ENCODE measurements at regions of chr14 and their contacts with region 1.

Region 1: GRCh38 chr14:58244556-58245387 is at the start of gene PSMA3:
- DNase-seq: peak; percentile 94 to 98 (median 98)
- ATAC-seq: peak; percentile 83
- H3K4me3 ChIP-seq: peak within 1 kb of the TSS; percentile 92 to 93
- H3K4me3 Mint-ChIP-seq: peak within 1 kb of the TSS; percentile 99
- H3K27ac ChIP-seq: peak within 1 kb of the TSS; percentile 91 to 96
- H3K27ac Mint-ChIP-seq: peak within 1 kb of the TSS; percentile 98
- H3K4me1 ChIP-seq: peaks cover 30% of the 10 kb centered on the region
- H3K4me1 Mint-ChIP-seq: peaks cover 49% of the 10 kb centered on the region
- H3K27me3 ChIP-seq: no peaks in the 10 kb centered on the region
- H3K27me3 Mint-ChIP-seq: no peaks in the 10 kb centered on the region
- CTCF ChIP-seq: no peak
- total RNA-seq, gene PSMA3: 105 to 106 TPM

Region 2: DNA sequence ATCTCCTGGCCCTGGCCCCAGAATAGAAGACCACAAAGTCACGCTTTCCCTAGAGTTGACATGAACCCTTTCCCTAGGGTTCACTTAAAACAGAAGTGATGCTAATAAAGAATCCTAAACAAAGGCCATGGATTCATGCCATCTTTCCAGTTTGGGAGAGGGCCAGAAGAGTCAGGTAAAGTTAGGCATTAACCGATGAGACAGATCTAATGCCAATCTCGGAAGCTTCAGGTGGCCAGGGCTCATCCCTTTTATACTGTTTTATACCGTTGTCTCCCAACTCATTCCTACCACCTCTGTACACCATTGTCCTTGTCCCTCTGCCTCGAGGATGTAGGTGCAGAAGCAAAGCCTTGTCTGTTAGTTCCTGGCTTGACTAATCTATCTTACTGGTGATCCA is 67.6 kb before region 1 on chr14:
- CTCF ChIA-PET with region 1: no interaction called
- POLR2A ChIA-PET with region 1: no interaction called
- intact Hi-C with region 1: no loop called
- DNase-seq: no peak
- ATAC-seq: no peak
- H3K4me3 ChIP-seq: no peak overlapping the region
- H3K4me3 Mint-ChIP-seq: no peak overlapping the region
- H3K27ac ChIP-seq: no peak overlapping the region
- H3K27ac Mint-ChIP-seq: no peak overlapping the region
- H3K4me1 ChIP-seq: no peaks in the 10 kb centered on the region
- H3K4me1 Mint-ChIP-seq: no peaks in the 10 kb centered on the region
- H3K27me3 ChIP-seq: no peaks in the 10 kb centered on the region
- H3K27me3 Mint-ChIP-seq: peaks cover 12% of the 10 kb centered on the region
- CTCF ChIP-seq: no peak

Region 3: GRCh38 chr14:58199726-58200479 is 44.9 kb before region 1 on chr14 and contains the start of gene ACTR10:
- CTCF ChIA-PET with region 1: interaction called, 4 read pairs
- POLR2A ChIA-PET with region 1: interaction called, 10 read pairs
- intact Hi-C with region 1: loop called (anchors 1 kb)
- DNase-seq: peak; percentile 76 to 95 (median 85)
- ATAC-seq: peak; percentile 87
- H3K4me3 ChIP-seq: peak within 1 kb of the TSS; percentile 75 to 92
- H3K4me3 Mint-ChIP-seq: peak within 1 kb of the TSS; percentile 94
- H3K27ac ChIP-seq: peak within 1 kb of the TSS; percentile 86 to 87
- H3K27ac Mint-ChIP-seq: peak within 1 kb of the TSS; percentile 98
- H3K4me1 ChIP-seq: peaks cover 25% of the 10 kb centered on the region
- H3K4me1 Mint-ChIP-seq: peaks cover 46% of the 10 kb centered on the region
- H3K27me3 ChIP-seq: no peaks in the 10 kb centered on the region
- H3K27me3 Mint-ChIP-seq: no peaks in the 10 kb centered on the region
- CTCF ChIP-seq: no peak
- total RNA-seq, gene ACTR10: 47.5 to 47.7 TPM

Region 4: GRCh38 chr14:58258156-58258555 is 13.4 kb after region 1 on chr14:
- CTCF ChIA-PET with region 1: interaction called, 3 read pairs
- POLR2A ChIA-PET with region 1: interaction called, 13 read pairs
- intact Hi-C with region 1: no loop called
- DNase-seq: no peak
- ATAC-seq: no peak
- H3K4me3 ChIP-seq: no peak overlapping the region
- H3K4me3 Mint-ChIP-seq: no peak overlapping the region
- H3K27ac ChIP-seq: no peak overlapping the region
- H3K27ac Mint-ChIP-seq: peak overlapping the region; percentile 60
- H3K4me1 ChIP-seq: no peaks in the 10 kb centered on the region
- H3K4me1 Mint-ChIP-seq: peaks cover 22% of the 10 kb centered on the region
- H3K27me3 ChIP-seq: no peaks in the 10 kb centered on the region
- H3K27me3 Mint-ChIP-seq: no peaks in the 10 kb centered on the region
- CTCF ChIP-seq: no peak

Region 5: DNA sequence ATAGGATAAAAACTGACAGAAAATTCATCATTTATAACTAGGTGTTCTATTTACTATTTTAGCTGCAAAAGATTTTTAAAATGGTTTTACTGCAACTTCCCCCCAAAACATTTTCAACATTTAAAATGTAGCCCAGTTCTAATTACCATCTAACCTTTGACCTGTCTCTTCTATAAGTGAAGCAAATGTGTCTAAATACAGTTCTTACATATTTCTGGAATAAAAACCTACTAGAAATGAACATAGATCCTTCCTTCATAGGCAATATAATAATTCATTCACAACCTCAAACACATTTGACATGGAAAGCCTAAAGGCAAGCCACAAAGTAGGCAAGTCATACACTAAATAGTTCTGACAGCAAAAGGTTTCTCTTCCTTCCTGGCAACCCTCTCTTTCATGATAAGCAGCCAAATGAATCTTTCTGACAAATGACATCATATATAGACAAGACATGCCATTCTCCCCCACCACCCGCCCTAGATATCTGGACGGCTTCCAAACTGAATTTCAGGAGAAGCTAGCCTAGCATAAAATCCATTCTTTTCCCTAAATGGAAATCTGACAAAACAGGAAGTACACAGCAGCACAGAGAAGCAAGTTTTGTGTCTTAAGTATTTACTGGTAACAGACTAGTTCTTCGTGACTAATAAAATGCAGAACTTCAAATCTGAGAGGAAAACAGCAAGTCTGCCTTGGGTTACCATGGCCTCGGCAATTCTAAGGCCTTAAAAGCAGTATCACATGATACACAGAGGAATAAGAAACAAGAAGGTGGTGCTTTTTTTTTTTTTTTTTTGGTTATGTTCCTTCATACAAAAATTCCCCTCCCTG is 36.4 kb after region 1 on chr14:
- CTCF ChIA-PET with region 1: no interaction called
- POLR2A ChIA-PET with region 1: interaction called, 4 read pairs
- intact Hi-C with region 1: loop called in 1 of 2 experiments (anchors 5 kb)
- DNase-seq: peak in 5 of 9 experiments; percentile 25 to 68 (median 43)
- ATAC-seq: peak; percentile 81
- H3K4me3 ChIP-seq: no peak overlapping the region
- H3K4me3 Mint-ChIP-seq: peak overlapping the region; percentile 65
- H3K27ac ChIP-seq: peak overlapping the region; percentile 42 to 64
- H3K27ac Mint-ChIP-seq: peak overlapping the region; percentile 96
- H3K4me1 ChIP-seq: peaks cover 42% of the 10 kb centered on the region
- H3K4me1 Mint-ChIP-seq: peaks cover 68% of the 10 kb centered on the region
- H3K27me3 ChIP-seq: no peaks in the 10 kb centered on the region
- H3K27me3 Mint-ChIP-seq: no peaks in the 10 kb centered on the region
- CTCF ChIP-seq: no peak